Adrenal gland (tissue), 19 donors: ENCODE measurements at regions of chr12 and their contacts with region 1.

Region 1: GRCh38 chr12:120228291-120229070 is 27.6 kb upstream of the RPLP0 start:
- DNase-seq: peak; percentile 86 to 95 (median 91)
- H3K4me3 ChIP-seq: no peak overlapping the region
- H3K27ac ChIP-seq: peak overlapping the region in 4 of 5 donors; percentile 6 to 98 (median 96)
- H3K4me1 ChIP-seq: peaks cover 54 to 76% of the 10 kb centered on the region in 2 donors
- H3K27me3 ChIP-seq: no peaks in the 10 kb centered on the region
- CTCF ChIP-seq: peak; percentile 91 to 99 (median 98)
- POLR2A ChIP-seq: no peak

Region 2: GRCh38 chr12:120265473-120266179 is 37.1 kb after region 1 on chr12 and contains the start of gene PXN:
- intact Hi-C with region 1: loop called (anchors 2 kb)
- DNase-seq: peak; percentile 88 to 95 (median 91)
- H3K4me3 ChIP-seq: peak within 1 kb of the TSS in 3 of 4 donors; percentile 45 to 100 (median 90)
- H3K27ac ChIP-seq: peak within 1 kb of the TSS; percentile 70 to 98 (median 86)
- H3K4me1 ChIP-seq: peaks cover 27 to 45% of the 10 kb centered on the region in 2 donors
- H3K27me3 ChIP-seq: no peaks in the 10 kb centered on the region
- CTCF ChIP-seq: peak; percentile 41 to 94 (median 82)
- POLR2A ChIP-seq: peak; percentile 40 to 83
- total RNA-seq, gene PXN: 12.5 to 156 (median 66.5) TPM